B cell (primary cell): ENCODE measurements at regions of chr11 and their contacts with region 1.

Region 1: GRCh38 chr11:66051766-66052663 is at the start of gene SF3B2:
- DNase-seq: peak; percentile 98
- ATAC-seq: peak; percentile 98
- H3K4me3 ChIP-seq: peak within 1 kb of the TSS; percentile 78 to 99 (median 88)
- H3K4me3 Mint-ChIP-seq: peak within 1 kb of the TSS; percentile 99
- H3K27ac ChIP-seq: peak within 1 kb of the TSS; percentile 61 to 85
- H3K27ac Mint-ChIP-seq: peak within 1 kb of the TSS; percentile 96
- H3K4me1 ChIP-seq: peaks cover 25 to 29% of the 10 kb centered on the region in 2 donors
- H3K4me1 Mint-ChIP-seq: peaks cover 29% of the 10 kb centered on the region
- H3K27me3 ChIP-seq: peaks cover 0 to 27% (median 5%) of the 10 kb centered on the region in 4 experiments
- H3K27me3 Mint-ChIP-seq: peaks cover 12% of the 10 kb centered on the region
- CTCF ChIP-seq: no peak
- total RNA-seq, gene SF3B2: 205 and 214 TPM in 2 replicates

Region 2: DNA sequence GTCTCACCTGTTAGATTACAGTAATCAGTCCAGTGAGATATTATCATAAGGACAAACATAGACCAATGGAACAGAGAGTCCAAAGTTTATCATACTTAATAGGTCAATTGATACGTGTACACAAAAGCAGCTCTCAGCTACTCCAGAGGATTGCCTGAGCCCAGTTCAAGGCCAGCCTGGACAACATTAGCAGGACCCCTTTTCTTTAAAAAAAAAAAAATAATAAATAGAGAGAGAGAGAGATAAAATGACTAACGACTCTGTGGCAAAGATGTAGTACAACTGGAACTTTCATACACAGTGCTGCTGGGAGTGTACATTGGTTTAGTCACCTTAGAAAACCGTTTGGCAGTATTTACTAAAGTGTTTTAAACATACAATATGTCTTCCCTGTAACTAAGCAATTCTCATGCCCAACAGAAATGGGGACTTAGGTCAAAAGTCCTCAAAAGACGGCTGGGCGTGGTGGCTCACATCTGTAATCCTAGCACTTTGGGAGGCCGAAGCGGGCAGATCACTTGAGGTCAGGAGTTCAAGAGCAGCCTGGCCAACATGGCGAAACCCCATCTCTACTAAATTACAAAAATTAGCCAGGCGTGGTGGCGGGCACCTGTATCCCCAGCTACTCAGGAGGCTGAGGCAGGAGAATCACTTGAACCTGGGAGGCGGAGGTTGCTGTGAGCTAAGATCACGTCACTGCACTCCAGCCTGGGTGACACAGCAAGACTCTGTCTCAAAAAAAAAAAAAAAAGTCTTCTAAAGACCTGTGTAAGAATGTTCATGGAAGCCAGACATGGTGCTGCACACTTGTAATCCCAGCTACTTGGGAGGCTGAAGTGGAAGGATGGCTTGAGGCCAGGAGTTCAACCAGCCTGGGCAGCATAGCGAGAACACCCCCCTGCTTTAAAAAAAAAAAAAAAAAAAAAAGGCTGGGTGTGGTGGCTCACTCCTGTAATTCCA is 207.5 kb before region 1 on chr11:
- CTCF ChIA-PET with region 1: no interaction called
- POLR2A ChIA-PET with region 1: no interaction called
- intact Hi-C with region 1: no loop called
- DNase-seq: no peak
- ATAC-seq: no peak
- H3K4me3 ChIP-seq: no peak overlapping the region
- H3K4me3 Mint-ChIP-seq: no peak overlapping the region
- H3K27ac ChIP-seq: no peak overlapping the region
- H3K27ac Mint-ChIP-seq: no peak overlapping the region
- H3K4me1 ChIP-seq: no peaks in the 10 kb centered on the region
- H3K4me1 Mint-ChIP-seq: no peaks in the 10 kb centered on the region
- H3K27me3 ChIP-seq: no peaks in the 10 kb centered on the region
- H3K27me3 Mint-ChIP-seq: no peaks in the 10 kb centered on the region
- CTCF ChIP-seq: no peak

Region 3: GRCh38 chr11:65961232-65961901 is 90.6 kb before region 1 on chr11 and contains the start of gene SART1:
- CTCF ChIA-PET with region 1: no interaction called
- POLR2A ChIA-PET with region 1: no interaction called
- intact Hi-C with region 1: loop called (anchors 1 kb)
- DNase-seq: peak; percentile 97
- ATAC-seq: peak; percentile 90
- H3K4me3 ChIP-seq: peak within 1 kb of the TSS; percentile 74 to 90 (median 87)
- H3K4me3 Mint-ChIP-seq: peak within 1 kb of the TSS; percentile 98
- H3K27ac ChIP-seq: peak within 1 kb of the TSS; percentile 77 to 89
- H3K27ac Mint-ChIP-seq: peak within 1 kb of the TSS; percentile 98
- H3K4me1 ChIP-seq: peaks cover 35 to 47% of the 10 kb centered on the region in 2 donors
- H3K4me1 Mint-ChIP-seq: peaks cover 52% of the 10 kb centered on the region
- H3K27me3 ChIP-seq: no peaks in the 10 kb centered on the region
- H3K27me3 Mint-ChIP-seq: no peaks in the 10 kb centered on the region
- CTCF ChIP-seq: no peak
- total RNA-seq, gene SART1: 97.4 and 102 TPM in 2 replicates

Region 4: DNA sequence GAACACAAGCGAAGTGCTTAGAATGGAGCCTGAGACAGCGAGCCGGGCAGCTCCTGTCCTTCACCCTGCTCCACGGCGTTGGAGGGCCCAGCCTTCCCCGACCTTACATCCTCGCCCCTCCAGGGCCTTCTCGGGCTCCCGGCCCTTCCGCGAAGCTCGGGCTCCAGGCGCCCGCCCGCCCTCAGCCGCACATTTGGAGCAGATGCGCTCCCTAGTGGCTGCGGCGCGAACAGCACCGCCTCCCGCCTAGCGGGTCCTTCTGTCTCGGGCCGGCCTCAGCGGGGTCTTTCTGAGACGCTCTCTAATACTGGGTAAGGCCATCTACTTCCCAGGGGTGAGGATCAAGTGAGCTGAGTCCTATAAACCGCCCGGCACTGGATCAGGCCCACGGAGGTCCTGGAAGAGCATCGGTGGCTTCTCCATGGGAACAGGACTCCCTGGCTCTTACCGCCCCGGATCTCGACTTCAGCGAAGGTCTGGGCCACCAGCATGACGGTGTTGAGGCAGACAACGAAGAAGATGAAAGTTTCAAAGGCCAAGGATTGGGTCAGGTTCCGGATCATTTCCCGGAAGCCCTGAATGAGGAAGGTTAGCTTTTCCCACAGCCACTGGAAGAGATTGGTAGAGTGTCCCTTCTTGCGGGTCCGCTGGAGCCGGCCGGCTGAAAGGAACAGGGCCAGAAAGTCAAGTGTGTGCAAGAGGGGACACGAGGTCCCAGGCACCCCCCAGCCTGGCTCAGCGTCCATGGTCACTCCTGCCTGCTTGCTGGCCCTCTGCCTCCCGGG is 29.4 kb before region 1 on chr11:
- CTCF ChIA-PET with region 1: no interaction called
- POLR2A ChIA-PET with region 1: interaction called, 8 read pairs
- intact Hi-C with region 1: loop called (anchors 1 kb)
- DNase-seq: peak; percentile 85
- ATAC-seq: peak; percentile 99
- H3K4me3 ChIP-seq: no peak overlapping the region
- H3K4me3 Mint-ChIP-seq: no peak overlapping the region
- H3K27ac ChIP-seq: no peak overlapping the region
- H3K27ac Mint-ChIP-seq: no peak overlapping the region
- H3K4me1 ChIP-seq: peaks cover 7% of the 10 kb centered on the region in 2 donors
- H3K4me1 Mint-ChIP-seq: peaks cover 5% of the 10 kb centered on the region
- H3K27me3 ChIP-seq: peaks cover 0 to 9% (median 4%) of the 10 kb centered on the region in 4 experiments
- H3K27me3 Mint-ChIP-seq: peaks cover 7% of the 10 kb centered on the region
- CTCF ChIP-seq: peak; percentile 93

Region 5: DNA sequence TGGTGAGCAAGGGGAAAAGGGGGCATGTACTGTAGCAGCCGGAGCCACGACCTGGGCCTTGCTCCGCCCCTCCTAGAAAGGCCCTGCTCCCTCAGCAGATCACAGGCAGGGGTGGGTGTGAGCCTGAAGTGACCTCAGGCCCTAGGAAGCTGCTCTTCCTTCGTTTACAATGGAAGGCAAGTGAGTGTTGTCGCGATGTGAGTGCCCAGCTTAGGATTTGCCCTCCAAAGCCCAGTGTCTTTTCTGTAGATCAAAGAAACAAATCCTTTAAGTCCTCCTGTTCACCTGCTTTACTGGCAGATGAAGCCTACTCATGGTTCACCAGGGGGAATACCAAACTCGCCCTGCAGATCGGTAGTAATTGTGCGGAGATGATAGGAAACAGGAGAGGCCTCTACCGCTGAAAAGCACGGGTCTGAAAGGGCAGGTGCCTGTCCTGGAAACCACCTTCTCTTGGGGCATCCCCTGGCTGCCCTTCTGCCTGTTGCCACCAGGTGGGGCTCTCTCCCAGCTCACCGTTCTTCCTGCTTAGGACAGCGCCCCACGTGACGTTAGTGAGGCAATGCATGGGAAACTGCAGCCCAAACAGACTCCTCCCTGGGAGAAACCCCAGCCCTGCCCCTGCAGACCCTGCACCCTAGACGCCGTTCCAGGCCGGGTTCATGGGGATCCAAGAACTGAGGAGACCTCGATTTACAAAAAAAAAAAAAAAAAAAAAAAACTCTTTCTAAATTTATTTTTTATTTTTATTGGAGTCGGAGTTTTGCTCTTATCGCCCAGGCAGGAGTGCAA is 170.5 kb after region 1 on chr11:
- CTCF ChIA-PET with region 1: interaction called, 3 read pairs
- POLR2A ChIA-PET with region 1: no interaction called
- intact Hi-C with region 1: loop called (anchors 1 kb)
- DNase-seq: peak; percentile 98
- ATAC-seq: peak; percentile 98
- H3K4me3 ChIP-seq: no peak overlapping the region
- H3K4me3 Mint-ChIP-seq: peak overlapping the region; percentile 6
- H3K27ac ChIP-seq: peak overlapping the region; percentile 94 to 95
- H3K27ac Mint-ChIP-seq: peak overlapping the region; percentile 91
- H3K4me1 ChIP-seq: peaks cover 10 to 14% of the 10 kb centered on the region in 2 donors
- H3K4me1 Mint-ChIP-seq: peaks cover 16% of the 10 kb centered on the region
- H3K27me3 ChIP-seq: no peaks in the 10 kb centered on the region
- H3K27me3 Mint-ChIP-seq: no peaks in the 10 kb centered on the region
- CTCF ChIP-seq: peak; percentile 99

Region 6: GRCh38 chr11:66328307-66329144 is 276.5 kb after region 1 on chr11:
- CTCF ChIA-PET with region 1: no interaction called
- POLR2A ChIA-PET with region 1: no interaction called
- intact Hi-C with region 1: no loop called
- DNase-seq: peak; percentile 89
- ATAC-seq: peak; percentile 98
- H3K4me3 ChIP-seq: peak overlapping the region in 1 of 5 experiments; percentile 30
- H3K4me3 Mint-ChIP-seq: peak overlapping the region; percentile 52
- H3K27ac ChIP-seq: no peak overlapping the region
- H3K27ac Mint-ChIP-seq: peak overlapping the region; percentile 47
- H3K4me1 ChIP-seq: peaks cover 15 to 25% of the 10 kb centered on the region in 2 donors
- H3K4me1 Mint-ChIP-seq: peaks cover 16% of the 10 kb centered on the region
- H3K27me3 ChIP-seq: no peaks in the 10 kb centered on the region
- H3K27me3 Mint-ChIP-seq: no peaks in the 10 kb centered on the region
- CTCF ChIP-seq: peak; percentile 93